Activated naive CD4-positive, alpha-beta T cell treated with anti-CD3 and anti-CD28 coated beads, Interleukin-2, amount 10 ng/mL, durations not matched to agents 7 days and 5 days (primary cell): ENCODE measurements at regions of chr2 and their contacts with region 1.

Region 1: DNA sequence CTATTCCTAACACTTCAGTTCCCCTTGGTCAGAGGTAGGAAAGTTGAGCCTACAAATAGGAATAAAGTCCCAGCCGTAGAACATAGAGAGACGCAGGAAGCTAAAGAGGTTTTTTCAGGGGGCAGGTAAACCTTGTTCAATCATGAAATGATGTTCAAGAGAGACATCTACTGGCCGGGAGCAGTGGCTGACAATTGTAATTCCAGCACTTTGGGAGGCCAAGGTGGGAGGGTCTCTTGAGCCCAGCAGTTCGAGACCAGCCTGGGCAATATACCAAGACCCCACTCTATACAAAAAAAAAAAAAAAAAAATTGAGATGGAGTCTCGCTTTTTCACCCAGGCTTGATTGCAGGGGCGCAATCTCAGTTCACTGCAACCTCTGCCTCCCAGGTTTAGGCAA is 66.7 kb upstream of the DNAJC10 start:
- DNase-seq: no peak
- H3K4me3 Mint-ChIP-seq: no peak overlapping the region
- H3K27ac Mint-ChIP-seq: no peak overlapping the region
- H3K4me1 Mint-ChIP-seq: peaks cover 18% of the 10 kb centered on the region
- H3K27me3 Mint-ChIP-seq: no peaks in the 10 kb centered on the region

Region 2: DNA sequence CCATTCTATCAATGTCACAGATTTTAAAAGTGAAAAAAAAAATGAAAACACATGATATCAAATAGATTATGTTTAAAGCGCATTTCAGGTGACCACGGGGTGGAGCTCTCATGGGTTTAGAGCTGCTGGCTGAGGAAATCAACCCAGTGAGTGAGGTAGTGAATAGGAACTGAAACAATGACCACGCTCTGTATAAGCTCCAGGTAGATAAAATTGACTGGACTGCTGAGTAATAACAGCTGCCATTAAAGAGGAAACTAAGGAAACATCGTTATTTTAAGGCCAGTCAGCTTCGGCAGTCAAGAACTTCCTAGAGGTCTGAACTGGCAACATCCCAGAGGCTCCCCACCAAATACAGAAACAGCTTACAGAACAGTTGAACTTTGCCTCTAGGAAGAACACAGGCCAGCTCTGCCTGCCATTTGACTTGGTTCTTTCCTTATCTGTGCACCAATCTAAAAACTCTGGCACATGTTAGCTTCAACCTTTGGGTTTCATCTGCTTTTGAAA is 408.4 kb before region 1 on chr2:
- CTCF ChIA-PET with region 1: interaction called, 21 read pairs
- DNase-seq: peak; percentile 37
- H3K4me3 Mint-ChIP-seq: no peak overlapping the region
- H3K27ac Mint-ChIP-seq: no peak overlapping the region
- H3K4me1 Mint-ChIP-seq: no peaks in the 10 kb centered on the region
- H3K27me3 Mint-ChIP-seq: no peaks in the 10 kb centered on the region